Activated naive CD8-positive, alpha-beta T cell treated with anti-CD3 and anti-CD28 coated beads, Interleukin-2, amount 10 ng/mL, durations not matched to agents 7 days and 5 days (primary cell): ENCODE measurements at regions of chr4 and their contacts with region 1.

Region 1: GRCh38 chr4:102500696-102501446 is at the start of gene NFKB1:
- DNase-seq: peak; percentile 75
- ATAC-seq: peak; percentile 64
- H3K4me3 Mint-ChIP-seq: peak within 1 kb of the TSS; percentile 90
- H3K27ac Mint-ChIP-seq: peak within 1 kb of the TSS; percentile 90
- H3K4me1 Mint-ChIP-seq: peaks cover 17% of the 10 kb centered on the region
- H3K27me3 Mint-ChIP-seq: no peaks in the 10 kb centered on the region
- total RNA-seq, gene NFKB1: 129 to 130 TPM

Region 2: GRCh38 chr4:102299354-102300107 is 201.3 kb before region 1 on chr4:
- POLR2A ChIA-PET with region 1: no interaction called
- DNase-seq: peak; percentile 26
- ATAC-seq: peak; percentile 45
- H3K4me3 Mint-ChIP-seq: no peak overlapping the region
- H3K27ac Mint-ChIP-seq: no peak overlapping the region
- H3K4me1 Mint-ChIP-seq: peaks cover 1% of the 10 kb centered on the region
- H3K27me3 Mint-ChIP-seq: no peaks in the 10 kb centered on the region

Region 3: DNA sequence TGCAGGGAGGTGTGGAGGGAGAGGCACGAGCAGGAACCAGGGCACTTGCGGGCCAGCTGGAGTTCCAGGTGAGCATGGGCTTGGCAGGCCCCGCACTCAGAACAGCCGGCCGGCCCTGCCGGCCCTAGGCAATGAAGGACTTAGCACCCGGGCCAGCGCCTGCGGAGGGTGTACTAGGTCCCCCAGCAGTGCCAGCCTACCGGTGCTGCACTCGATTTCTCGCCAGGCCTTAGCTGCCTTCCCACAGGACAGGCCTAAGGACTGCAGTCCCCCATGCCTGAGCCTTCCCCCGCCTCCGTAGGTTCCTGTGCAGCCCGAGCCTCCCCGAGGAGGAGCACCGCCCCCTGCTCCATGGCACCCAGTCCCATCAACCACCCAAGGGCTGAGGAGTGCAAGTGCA is 17.8 kb before region 1 on chr4:
- POLR2A ChIA-PET with region 1: interaction called, 18 read pairs
- DNase-seq: no peak
- ATAC-seq: no peak
- H3K4me3 Mint-ChIP-seq: no peak overlapping the region
- H3K27ac Mint-ChIP-seq: no peak overlapping the region
- H3K4me1 Mint-ChIP-seq: peaks cover 19% of the 10 kb centered on the region
- H3K27me3 Mint-ChIP-seq: no peaks in the 10 kb centered on the region

Region 4: GRCh38 chr4:102527695-102528283 is 26.9 kb after region 1 on chr4:
- POLR2A ChIA-PET with region 1: interaction called, 20 read pairs
- DNase-seq: no peak
- ATAC-seq: peak; percentile 58
- H3K4me3 Mint-ChIP-seq: peak overlapping the region; percentile 87
- H3K27ac Mint-ChIP-seq: peak overlapping the region; percentile 90
- H3K4me1 Mint-ChIP-seq: peaks cover 71% of the 10 kb centered on the region
- H3K27me3 Mint-ChIP-seq: no peaks in the 10 kb centered on the region